Heart right ventricle (tissue), 16 donors: ENCODE measurements at regions of chrX and their contacts with region 1.

Region 1: DNA sequence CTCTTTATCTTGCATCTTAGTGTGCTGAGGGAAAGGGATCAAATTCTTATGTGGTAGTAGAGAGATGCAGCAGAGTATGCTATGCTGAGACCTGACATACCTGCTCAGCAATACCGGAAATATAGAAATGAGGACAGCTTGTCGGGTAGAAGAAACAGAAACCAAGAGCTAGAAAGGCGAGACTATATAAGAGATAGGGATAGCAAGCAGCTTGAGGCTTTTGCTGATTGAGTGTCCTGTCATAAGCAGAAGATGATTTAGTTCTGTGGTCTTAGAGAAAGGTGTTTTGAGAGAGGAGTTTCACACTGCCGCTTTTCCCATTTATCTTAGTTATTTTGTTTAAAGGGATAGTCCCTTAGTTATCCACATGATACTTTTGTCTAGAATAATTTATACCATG is 31.7 kb downstream of the USP9X start:
- DNase-seq: no peak
- ATAC-seq: no peak
- H3K4me3 ChIP-seq: no peak overlapping the region
- H3K27ac ChIP-seq: no peak overlapping the region
- H3K4me1 ChIP-seq: peaks cover 0 to 67% (median 48%) of the 10 kb centered on the region in 9 donors
- H3K27me3 ChIP-seq: peaks cover 0 to 15% (median 0%) of the 10 kb centered on the region in 7 donors
- CTCF ChIP-seq: no peak

Region 2: GRCh38 chrX:40647307-40648197 is 469.4 kb before region 1 on chrX and contains the start of gene CXorf38:
- intact Hi-C with region 1: loop called in 4 of 10 experiments (anchors 5 to 10 kb)
- DNase-seq: peak; percentile 87 to 92
- ATAC-seq: peak; percentile 77 to 94 (median 88)
- H3K4me3 ChIP-seq: peak within 1 kb of the TSS; percentile 67 to 88 (median 78)
- H3K27ac ChIP-seq: peak within 1 kb of the TSS; percentile 54 to 91 (median 82)
- H3K4me1 ChIP-seq: peaks cover 0 to 46% (median 26%) of the 10 kb centered on the region in 9 donors
- H3K27me3 ChIP-seq: peaks cover 0 to 12% (median 0%) of the 10 kb centered on the region in 7 donors
- CTCF ChIP-seq: no peak
- total RNA-seq, gene CXorf38: 3.4 to 11.9 (median 4.9) TPM

Region 3: DNA sequence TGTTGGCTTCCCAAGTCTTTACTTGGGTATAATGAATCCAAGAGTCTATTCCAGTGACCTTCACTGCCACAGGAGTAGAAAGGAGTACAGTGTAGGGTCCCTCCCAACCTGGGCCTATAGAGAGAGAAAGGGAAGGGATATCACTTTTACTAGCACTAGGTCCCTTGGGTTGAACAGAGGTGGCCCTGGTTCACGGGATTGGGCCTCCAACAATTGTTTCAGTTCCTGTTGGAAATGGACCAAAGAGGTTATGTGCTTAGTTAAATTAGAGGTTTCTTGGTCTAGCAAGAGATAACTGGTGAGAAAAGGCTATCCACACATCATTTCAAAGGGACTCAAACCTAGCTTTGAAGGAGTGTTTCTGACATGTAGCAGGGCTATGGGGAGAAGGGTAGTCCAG is 324.5 kb before region 1 on chrX:
- intact Hi-C with region 1: loop called in 2 of 10 experiments (anchors 10 kb)
- DNase-seq: no peak
- ATAC-seq: no peak
- H3K4me3 ChIP-seq: no peak overlapping the region
- H3K27ac ChIP-seq: no peak overlapping the region
- H3K4me1 ChIP-seq: peaks cover 0 to 13% (median 0%) of the 10 kb centered on the region in 9 donors
- H3K27me3 ChIP-seq: peaks cover 0 to 73% (median 0%) of the 10 kb centered on the region in 7 donors
- CTCF ChIP-seq: no peak

Region 4: DNA sequence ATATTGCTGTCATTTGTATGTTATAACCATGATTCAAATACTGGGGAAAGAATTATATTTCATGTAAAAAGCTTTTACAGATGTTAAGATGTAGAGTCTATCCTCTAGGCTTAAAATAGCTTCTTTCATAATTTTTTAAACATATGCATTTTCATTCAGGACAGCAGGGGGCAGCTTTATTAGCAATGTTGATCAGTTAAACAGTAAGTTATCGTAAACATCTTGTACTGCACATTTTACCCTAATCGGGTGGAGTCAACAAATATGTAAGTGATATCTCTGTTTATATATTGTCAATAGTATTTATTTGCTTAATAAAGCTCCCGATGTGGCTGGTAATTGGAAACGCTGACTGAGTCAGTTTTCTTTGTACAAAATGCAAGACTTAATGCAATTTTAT is 239.1 kb before region 1 on chrX:
- intact Hi-C with region 1: loop called in 6 of 10 experiments (anchors 2 to 10 kb)
- DNase-seq: no peak
- ATAC-seq: no peak
- H3K4me3 ChIP-seq: no peak overlapping the region
- H3K27ac ChIP-seq: no peak overlapping the region
- H3K4me1 ChIP-seq: no peaks in the 10 kb centered on the region
- H3K27me3 ChIP-seq: peaks cover 0 to 20% (median 0%) of the 10 kb centered on the region in 7 donors
- CTCF ChIP-seq: peak in 7 of 9 donors; percentile 38 to 59 (median 50)

Region 5: DNA sequence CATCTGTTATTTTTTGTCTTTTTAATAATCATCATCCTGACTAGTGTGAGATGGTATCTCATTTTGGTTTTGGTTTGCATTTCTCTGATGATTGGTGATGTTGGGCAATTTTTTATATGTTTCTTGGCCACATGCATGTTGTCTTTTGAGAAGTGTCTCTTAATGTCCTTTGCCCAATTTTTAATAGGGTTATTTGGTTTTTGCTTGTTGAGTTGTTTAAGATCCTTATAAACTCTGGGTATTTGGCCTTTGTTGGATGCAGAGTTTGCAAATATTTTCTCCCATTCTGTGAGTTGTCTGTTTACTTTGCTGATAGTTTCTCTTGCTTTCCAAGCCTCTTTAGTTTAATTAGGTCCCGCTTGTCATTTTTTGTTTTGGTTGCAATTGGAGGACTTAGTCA is 229.5 kb before region 1 on chrX:
- intact Hi-C with region 1: loop called in 2 of 10 experiments (anchors 5 to 10 kb)
- DNase-seq: no peak
- ATAC-seq: no peak
- H3K4me3 ChIP-seq: no peak overlapping the region
- H3K27ac ChIP-seq: no peak overlapping the region
- H3K4me1 ChIP-seq: no peaks in the 10 kb centered on the region
- H3K27me3 ChIP-seq: peaks cover 0 to 23% (median 0%) of the 10 kb centered on the region in 7 donors
- CTCF ChIP-seq: no peak

Region 6: DNA sequence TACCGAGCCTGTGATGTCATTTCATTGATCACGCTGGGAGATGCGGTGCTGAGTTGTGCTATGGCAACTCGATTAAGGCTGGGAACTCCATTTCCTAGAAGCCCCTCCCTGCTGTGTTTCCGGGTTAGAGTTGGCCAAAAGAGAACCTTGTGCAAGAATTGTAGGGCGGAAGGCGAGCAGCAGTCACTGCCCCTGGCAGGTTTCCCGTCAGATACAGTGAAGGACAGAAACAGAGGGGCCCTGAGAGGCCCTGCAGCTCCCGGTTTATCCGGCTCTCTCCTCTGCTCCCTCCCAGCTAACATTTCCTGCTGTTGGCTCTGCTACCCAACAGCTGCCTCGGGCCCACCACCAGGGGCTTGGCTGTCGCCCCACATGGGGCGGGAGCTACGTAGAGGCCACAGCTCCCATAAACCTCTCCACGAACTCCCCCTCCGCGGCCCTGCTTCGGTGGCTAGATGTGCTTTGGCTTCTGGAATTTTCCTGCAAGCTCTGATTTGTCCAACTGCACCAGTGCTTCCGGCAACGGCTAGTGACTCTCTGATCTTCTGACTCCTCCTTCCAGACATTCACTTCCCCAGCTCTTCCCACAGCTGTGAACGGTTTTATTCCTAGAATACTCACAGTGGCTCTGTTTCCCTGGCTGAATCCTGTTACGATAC is 106.6 kb before region 1 on chrX:
- intact Hi-C with region 1: loop called in 1 of 10 experiments (anchors 10 kb)
- DNase-seq: peak; percentile 70 to 90
- ATAC-seq: peak; percentile 94 to 97 (median 96)
- H3K4me3 ChIP-seq: peak overlapping the region in 8 of 10 donors; percentile 6 to 45 (median 36)
- H3K27ac ChIP-seq: peak overlapping the region; percentile 64 to 91 (median 84)
- H3K4me1 ChIP-seq: peaks cover 0 to 24% (median 8%) of the 10 kb centered on the region in 9 donors
- H3K27me3 ChIP-seq: peaks cover 0 to 56% (median 0%) of the 10 kb centered on the region in 7 donors
- CTCF ChIP-seq: peak in 6 of 9 donors; percentile 24 to 47 (median 36)